Dorsolateral prefrontal cortex (tissue), 120 donors: ENCODE measurements at regions of chr13 and their contacts with region 1.

Region 1: GRCh38 chr13:44435142-44435982 is 61.7 kb downstream of the SERP2 start:
- DNase-seq: peak; percentile 77 to 97 (median 94)
- H3K4me3 ChIP-seq: peak overlapping the region; percentile 56 to 99 (median 87)
- H3K27ac ChIP-seq: peak overlapping the region; percentile 90 to 100 (median 98)
- H3K27me3 ChIP-seq: no peaks in the 10 kb centered on the region
- CTCF ChIP-seq: peak in 6 of 56 donors; percentile 1 to 23 (median 10)

Region 2: GRCh38 chr13:43986421-43986981 is 448.9 kb before region 1 on chr13:
- intact Hi-C with region 1: loop called in 1 of 2 experiments (anchors 10 kb)
- DNase-seq: no peak
- H3K4me3 ChIP-seq: no peak overlapping the region
- H3K27ac ChIP-seq: peak overlapping the region in 32 of 59 donors; percentile 1 to 63 (median 34)
- H3K27me3 ChIP-seq: no peaks in the 10 kb centered on the region
- CTCF ChIP-seq: peak in 14 of 56 donors; percentile 10 to 42 (median 22)

Region 3: GRCh38 chr13:44141725-44142539 is 293.4 kb before region 1 on chr13:
- intact Hi-C with region 1: loop called (anchors 2 to 5 kb)
- DNase-seq: peak; percentile 95 to 100 (median 98)
- H3K4me3 ChIP-seq: peak overlapping the region; percentile 52 to 89 (median 72)
- H3K27ac ChIP-seq: peak overlapping the region; percentile 83 to 100 (median 98)
- H3K27me3 ChIP-seq: no peaks in the 10 kb centered on the region
- CTCF ChIP-seq: peak in 24 of 56 donors; percentile 1 to 43 (median 20)

Region 4: DNA sequence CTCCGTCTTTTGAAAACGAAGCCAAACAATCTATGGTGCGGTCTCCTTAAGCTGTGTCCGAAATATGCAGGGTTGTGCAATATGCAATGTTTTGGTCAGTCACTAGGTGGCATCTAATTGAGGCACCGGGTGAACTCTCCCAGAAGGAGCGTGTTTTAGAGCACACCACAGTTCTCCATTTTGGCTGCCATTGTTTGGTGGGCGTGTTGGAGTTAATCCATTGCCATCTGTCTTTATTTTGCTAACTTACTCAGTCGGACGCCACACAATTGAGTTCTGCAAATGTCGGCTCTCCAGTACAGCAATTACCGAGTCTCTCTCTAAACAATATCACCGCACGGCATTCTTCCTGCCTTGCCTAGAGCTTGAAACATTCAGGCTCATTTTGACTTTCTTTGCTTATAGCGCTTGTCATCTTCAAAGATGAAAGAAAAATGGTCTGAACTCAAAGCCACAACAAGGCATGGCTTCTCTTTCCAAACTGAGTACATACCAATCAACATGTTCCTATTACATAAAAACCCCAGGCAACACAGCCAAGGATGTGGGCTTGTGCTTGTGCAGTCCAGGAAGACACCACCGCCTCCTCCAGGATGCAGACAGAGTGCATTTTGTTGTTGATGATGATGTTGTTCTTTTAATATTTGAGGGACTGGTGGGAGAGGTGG is 243.7 kb before region 1 on chr13:
- intact Hi-C with region 1: loop called in 1 of 2 experiments (anchors 2 kb)
- DNase-seq: peak in 6 of 10 donors; percentile 40 to 76 (median 44)
- H3K4me3 ChIP-seq: peak overlapping the region in 18 of 59 donors; percentile 0 to 43 (median 27)
- H3K27ac ChIP-seq: peak overlapping the region; percentile 17 to 90 (median 76)
- H3K27me3 ChIP-seq: no peaks in the 10 kb centered on the region
- CTCF ChIP-seq: peak; percentile 42 to 82 (median 71)

Region 5: GRCh38 chr13:44243198-44243857 is 192.0 kb before region 1 on chr13:
- intact Hi-C with region 1: loop called in 1 of 2 experiments (anchors 1 kb)
- DNase-seq: peak in 9 of 10 donors; percentile 57 to 82 (median 74)
- H3K4me3 ChIP-seq: peak overlapping the region in 1 of 59 donors; percentile 3
- H3K27ac ChIP-seq: peak overlapping the region; percentile 45 to 94 (median 85)
- H3K27me3 ChIP-seq: no peaks in the 10 kb centered on the region
- CTCF ChIP-seq: peak in 53 of 56 donors; percentile 17 to 79 (median 55)

Region 6: DNA sequence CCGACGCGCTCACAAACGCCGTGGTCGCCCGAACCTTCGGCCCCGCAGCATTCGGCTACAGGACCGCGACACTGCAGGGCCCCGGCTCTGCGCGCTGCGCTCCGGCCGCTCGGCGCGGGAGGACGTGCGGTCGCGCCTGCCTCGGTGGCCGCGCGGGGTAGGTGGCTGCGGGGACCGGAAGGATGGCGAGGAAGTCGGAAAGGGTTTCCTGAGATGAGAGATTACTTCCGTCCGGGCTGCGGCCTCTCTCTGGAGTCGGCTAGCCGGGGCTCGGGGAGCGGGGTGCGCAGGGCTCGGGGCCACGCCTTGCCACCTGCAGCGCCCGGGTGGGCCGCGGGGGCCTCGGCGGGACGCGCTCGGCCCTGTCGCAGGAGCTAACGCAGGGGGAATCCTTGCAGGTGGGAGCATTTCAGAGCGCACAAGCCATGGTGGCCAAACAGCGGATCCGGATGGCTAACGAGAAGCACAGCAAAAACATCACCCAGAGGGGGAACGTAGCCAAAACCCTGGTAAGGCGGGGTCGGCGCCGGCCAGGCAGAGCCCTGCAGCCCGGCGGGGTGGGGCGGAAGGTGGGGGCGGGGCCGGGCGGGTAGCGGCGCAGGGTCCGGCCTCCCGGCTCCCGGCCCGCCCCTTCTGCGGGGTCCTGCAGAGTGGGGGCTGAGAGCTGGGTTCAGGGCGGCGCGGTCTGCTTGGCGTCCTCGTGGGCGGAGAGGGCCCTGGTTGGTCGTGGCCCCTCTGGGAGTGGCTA is 61.6 kb before region 1 on chr13 and contains the start of gene SERP2:
- intact Hi-C with region 1: loop called (anchors 2 to 5 kb)
- DNase-seq: peak in 8 of 10 donors; percentile 28 to 75 (median 54)
- H3K4me3 ChIP-seq: peak within 1 kb of the TSS; percentile 54 to 94 (median 82)
- H3K27ac ChIP-seq: peak within 1 kb of the TSS; percentile 64 to 99 (median 94)
- H3K27me3 ChIP-seq: no peaks in the 10 kb centered on the region
- CTCF ChIP-seq: peak in 3 of 56 donors; percentile 1 to 15 (median 12)
- total RNA-seq, gene SERP2: 37.0 to 96.0 (median 70.9) TPM